ENCODE measurements at regions of chr15 and their contacts with region 1.

Region 1: DNA sequence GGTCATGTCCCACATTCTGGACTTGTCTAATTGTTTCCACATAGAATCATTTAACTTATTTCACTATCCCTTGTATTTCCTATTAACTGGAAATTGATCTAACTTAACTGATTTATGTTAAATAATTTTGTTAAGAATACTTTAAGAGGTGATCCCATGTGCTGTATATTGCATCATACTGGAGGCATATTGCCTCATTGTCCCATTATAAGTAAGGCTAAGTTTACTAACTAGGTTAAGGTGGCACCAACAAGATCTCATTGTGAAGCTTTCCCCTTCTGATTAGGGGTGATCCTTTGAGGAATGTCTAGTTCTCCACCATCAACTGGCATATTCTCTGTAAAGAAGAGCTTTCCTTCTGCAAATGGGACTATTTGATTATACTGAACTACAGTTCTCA is 24.4 kb downstream of the MAP1A start:
- DNase-seq: no peak
- ATAC-seq: 0 out of 3 replicates have a peak, but pooled peaks have one; percentile 37
- H3K4me3 ChIP-seq: no peak overlapping the region
- H3K27ac ChIP-seq: no peak overlapping the region
- H3K4me1 ChIP-seq: no peaks in the 10 kb centered on the region
- H3K27me3 ChIP-seq: no peaks in the 10 kb centered on the region
- CTCF ChIP-seq: no peak
- EP300 ChIP-seq: no peak
- POLR2A ChIP-seq: no peak
- RAD21 ChIP-seq: no peak

Region 2: GRCh38 chr15:43299411-43299810 is 242.4 kb before region 1 on chr15:
- CTCF ChIA-PET with region 1: no interaction called
- POLR2A ChIA-PET with region 1: no interaction called
- in situ Hi-C with region 1: no loop called
- intact Hi-C with region 1: no loop called
- DNase-seq: no peak
- ATAC-seq: no peak
- H3K4me3 ChIP-seq: no peak overlapping the region
- H3K27ac ChIP-seq: no peak overlapping the region
- H3K4me1 ChIP-seq: no peaks in the 10 kb centered on the region; a peak in 2 of 5 replicates
- H3K27me3 ChIP-seq: peaks cover under 1 to 2% of the 10 kb centered on the region in 2 experiments; a peak in 2 of 5 replicates
- CTCF ChIP-seq: no peak
- EP300 ChIP-seq: no peak
- POLR2A ChIP-seq: no peak
- RAD21 ChIP-seq: no peak

Region 3: GRCh38 chr15:43531018-43531670 is 10.6 kb before region 1 on chr15:
- CTCF ChIA-PET with region 1: no interaction called
- POLR2A ChIA-PET with region 1: interaction called, 12 read pairs
- in situ Hi-C with region 1: no loop called
- intact Hi-C with region 1: no loop called
- DNase-seq: no peak
- ATAC-seq: peak; percentile 42
- H3K4me3 ChIP-seq: no peak overlapping the region
- H3K27ac ChIP-seq: no peak overlapping the region
- H3K4me1 ChIP-seq: peaks cover 4 to 12% of the 10 kb centered on the region in 2 experiments; a peak in 3 of 5 replicates
- H3K27me3 ChIP-seq: no peaks in the 10 kb centered on the region
- CTCF ChIP-seq: no peak
- EP300 ChIP-seq: no peak
- POLR2A ChIP-seq: no peak
- RAD21 ChIP-seq: no peak